Ovary (tissue), 10 donors: ENCODE measurements at regions of chr9 and their contacts with region 1.

Region 1: DNA sequence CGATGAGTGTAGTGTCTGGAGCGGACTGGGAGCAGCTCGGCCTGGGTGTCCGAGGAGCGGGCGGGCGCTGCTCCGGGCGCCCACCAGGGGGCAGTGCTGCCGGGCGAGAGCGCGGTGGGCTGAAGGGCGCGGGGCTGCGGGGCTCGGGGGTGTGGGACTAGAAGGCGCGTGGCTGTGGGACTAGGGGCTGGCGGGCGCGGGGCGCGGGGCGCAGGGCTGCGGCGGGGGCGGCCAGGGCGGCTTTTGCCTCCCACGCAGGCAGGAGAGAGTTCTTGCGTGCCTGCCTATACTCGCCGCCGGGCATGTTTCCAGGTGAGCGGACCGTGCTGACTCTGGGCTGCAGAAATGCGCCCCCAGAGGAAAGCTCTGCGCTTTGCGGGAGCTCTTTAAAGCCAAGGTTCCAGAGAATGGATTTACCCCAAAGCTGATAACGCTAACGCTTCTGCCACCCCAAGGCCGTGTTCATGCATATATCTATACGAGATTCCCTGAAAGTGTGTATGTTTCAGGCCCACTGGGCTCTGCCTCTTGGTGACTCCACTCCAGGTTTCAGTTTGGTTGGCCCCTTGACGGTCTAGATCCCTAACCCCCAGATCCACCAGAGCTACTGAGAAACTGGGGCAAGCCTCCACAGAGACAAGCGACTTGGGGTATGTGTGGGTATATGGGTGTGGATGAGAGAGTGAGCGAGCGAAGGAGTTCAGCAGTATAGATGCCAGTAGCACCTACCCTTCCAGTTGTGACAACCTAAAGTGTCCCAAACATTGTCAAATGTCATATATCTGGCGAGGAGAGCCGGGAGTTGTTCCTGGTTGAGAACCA is 56.2 kb downstream of the ACER2 start:
- DNase-seq: peak; percentile 81 to 90 (median 83)
- H3K4me3 ChIP-seq: peak overlapping the region; percentile 60
- H3K27ac ChIP-seq: no peak overlapping the region
- H3K4me1 ChIP-seq: no peaks in the 10 kb centered on the region
- H3K27me3 ChIP-seq: no peaks in the 10 kb centered on the region
- CTCF ChIP-seq: peak; percentile 28 to 74 (median 65)
- EP300 ChIP-seq: no peak
- POLR2A ChIP-seq: no peak

Region 2: GRCh38 chr9:19048966-19049916 is 415.7 kb before region 1 on chr9 and contains the start of gene RRAGA:
- intact Hi-C with region 1: loop called in 1 of 4 experiments (anchors 10 kb)
- DNase-seq: peak; percentile 94 to 98 (median 96)
- H3K4me3 ChIP-seq: peak within 1 kb of the TSS; percentile 73
- H3K27ac ChIP-seq: peak within 1 kb of the TSS; percentile 95 to 96
- H3K4me1 ChIP-seq: peaks cover 10% of the 10 kb centered on the region
- H3K27me3 ChIP-seq: no peaks in the 10 kb centered on the region
- CTCF ChIP-seq: peak; percentile 94 to 96 (median 94)
- EP300 ChIP-seq: no peak
- POLR2A ChIP-seq: peak; percentile 85
- total RNA-seq, gene RRAGA: 36.6 to 111 (median 104) TPM

Region 3: DNA sequence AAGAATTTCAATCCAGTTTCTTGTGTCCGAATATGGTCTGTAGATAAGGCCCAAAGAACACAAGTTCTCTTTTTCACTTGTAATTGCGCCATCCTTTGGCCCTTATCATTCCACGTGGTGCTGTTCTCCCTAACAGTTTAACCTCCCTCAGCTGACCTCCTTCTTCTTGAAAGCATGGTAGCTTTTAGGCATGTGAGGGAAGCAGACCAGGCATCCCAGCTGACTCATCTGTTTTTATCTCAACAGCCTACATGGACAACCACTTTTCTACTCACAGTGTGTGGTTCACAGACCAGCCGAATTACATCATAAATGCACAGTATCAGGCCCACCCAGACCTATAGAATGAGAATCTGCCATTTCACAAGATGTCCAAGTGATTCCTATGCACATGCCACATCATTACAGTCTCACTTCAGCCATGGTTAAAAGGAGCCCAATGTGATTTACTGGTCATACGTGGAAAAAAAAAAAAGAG is 310.8 kb before region 1 on chr9:
- intact Hi-C with region 1: no loop called
- DNase-seq: peak; percentile 42 to 85 (median 60)
- H3K4me3 ChIP-seq: no peak overlapping the region
- H3K27ac ChIP-seq: peak overlapping the region in 1 of 2 donors; percentile 23
- H3K4me1 ChIP-seq: peaks cover 7% of the 10 kb centered on the region
- H3K27me3 ChIP-seq: no peaks in the 10 kb centered on the region
- CTCF ChIP-seq: no peak
- EP300 ChIP-seq: peak; percentile 72
- POLR2A ChIP-seq: no peak

Region 4: GRCh38 chr9:19493174-19493811 is 28.3 kb after region 1 on chr9:
- intact Hi-C with region 1: no loop called
- DNase-seq: peak; percentile 45 to 69 (median 47)
- H3K4me3 ChIP-seq: peak overlapping the region; percentile 32
- H3K27ac ChIP-seq: no peak overlapping the region
- H3K4me1 ChIP-seq: peaks cover 3% of the 10 kb centered on the region
- H3K27me3 ChIP-seq: no peaks in the 10 kb centered on the region
- CTCF ChIP-seq: peak; percentile 16 to 62 (median 42)
- EP300 ChIP-seq: no peak
- POLR2A ChIP-seq: no peak

Region 5: GRCh38 chr9:19934301-19934868 is 469.4 kb after region 1 on chr9:
- intact Hi-C with region 1: no loop called
- DNase-seq: peak in 3 of 5 donors; percentile 19 to 43 (median 35)
- H3K4me3 ChIP-seq: peak overlapping the region; percentile 39
- H3K27ac ChIP-seq: no peak overlapping the region
- H3K4me1 ChIP-seq: peaks cover 3% of the 10 kb centered on the region
- H3K27me3 ChIP-seq: no peaks in the 10 kb centered on the region
- CTCF ChIP-seq: no peak
- EP300 ChIP-seq: no peak
- POLR2A ChIP-seq: no peak